ENCODE measurements at regions of chr4 and their contacts with region 1.

Region 1: DNA sequence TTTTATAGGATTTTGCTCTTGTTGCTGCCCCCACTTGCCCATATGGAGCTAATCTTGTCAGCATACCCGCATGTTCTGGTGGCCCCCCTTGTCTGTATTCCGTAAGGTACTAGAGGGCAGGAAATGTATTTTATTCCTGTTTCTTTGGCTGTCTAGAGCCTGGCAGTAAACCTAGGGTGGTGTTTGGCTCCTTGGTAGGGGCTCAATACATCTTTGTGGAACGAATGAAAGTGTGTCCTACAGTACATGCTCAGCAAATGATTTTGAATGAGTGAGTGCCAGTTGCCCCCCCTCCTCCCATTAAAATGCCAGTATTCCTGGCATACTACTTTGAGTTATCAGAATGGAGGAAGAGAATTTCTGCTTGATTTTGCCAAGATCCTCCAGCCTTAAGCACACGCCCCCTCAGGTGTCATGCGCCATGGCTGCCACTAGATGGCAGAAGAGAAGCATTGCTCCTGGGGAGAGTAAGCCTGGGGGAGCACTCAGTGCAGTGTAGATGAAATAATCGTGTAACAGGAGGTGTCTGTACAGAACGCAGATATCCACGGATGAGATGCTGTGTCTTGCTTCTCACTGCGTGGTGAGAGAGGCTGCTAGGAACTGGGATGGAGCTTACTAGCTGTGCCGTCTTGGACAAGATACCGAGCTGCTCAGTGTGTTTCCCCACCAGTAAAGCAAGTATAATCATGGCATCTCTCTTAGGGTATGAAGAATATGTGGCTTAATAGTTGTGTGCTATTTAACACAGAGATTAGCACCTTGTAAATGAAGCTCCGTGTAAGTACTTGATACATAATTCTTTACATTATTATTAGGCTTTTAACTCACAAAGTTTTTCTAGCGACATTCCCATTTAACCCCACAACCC is 17.2 kb upstream of the RNF212 start:
- DNase-seq: peak; percentile 74 to 91
- ATAC-seq: peak; percentile 96 to 100 (median 99)
- H3K4me3 ChIP-seq: no peak overlapping the region
- H3K4me3 Mint-ChIP-seq: no peak overlapping the region
- H3K27ac ChIP-seq: no peak overlapping the region
- H3K27ac Mint-ChIP-seq: peak overlapping the region in 1 of 2 donors; percentile 33
- H3K4me1 ChIP-seq: peaks cover 10% of the 10 kb centered on the region
- H3K4me1 Mint-ChIP-seq: peaks cover 0 to 15% of the 10 kb centered on the region in 2 donors
- H3K27me3 ChIP-seq: no peaks in the 10 kb centered on the region
- H3K27me3 Mint-ChIP-seq: peaks cover 0 to 13% of the 10 kb centered on the region in 2 donors
- CTCF ChIP-seq: peak; percentile 98

Region 2: DNA sequence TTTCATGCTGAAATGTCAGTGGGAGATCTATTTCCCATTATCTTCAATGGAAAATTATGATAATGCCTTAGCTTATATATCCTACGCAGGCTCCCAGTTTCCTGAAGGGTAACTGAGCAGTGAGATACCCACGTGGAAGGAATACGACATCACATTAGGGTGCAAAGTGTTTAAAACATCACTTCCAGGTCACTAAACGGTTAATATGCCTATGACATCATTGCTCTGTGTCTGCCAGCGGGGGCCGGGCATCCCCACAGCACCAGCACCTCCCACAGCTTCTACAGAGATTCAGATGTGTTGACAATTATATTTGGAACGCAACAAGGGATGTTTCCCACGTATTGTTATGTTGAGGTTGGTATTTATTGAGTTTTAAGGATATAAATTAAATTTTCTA is 581.6 kb before region 1 on chr4:
- intact Hi-C with region 1: no loop called
- DNase-seq: no peak
- ATAC-seq: no peak
- H3K4me3 ChIP-seq: no peak overlapping the region
- H3K4me3 Mint-ChIP-seq: no peak overlapping the region
- H3K27ac ChIP-seq: no peak overlapping the region
- H3K27ac Mint-ChIP-seq: no peak overlapping the region
- H3K4me1 ChIP-seq: no peaks in the 10 kb centered on the region
- H3K4me1 Mint-ChIP-seq: no peaks in the 10 kb centered on the region
- H3K27me3 ChIP-seq: peaks cover 4% of the 10 kb centered on the region
- H3K27me3 Mint-ChIP-seq: peaks cover 8 to 18% of the 10 kb centered on the region in 2 donors
- CTCF ChIP-seq: no peak

Region 3: GRCh38 chr4:781493-782216 is 348.9 kb before region 1 on chr4:
- intact Hi-C with region 1: no loop called
- DNase-seq: peak; percentile 99
- ATAC-seq: peak; percentile 87 to 97 (median 92)
- H3K4me3 ChIP-seq: peak overlapping the region; percentile 97
- H3K4me3 Mint-ChIP-seq: peak overlapping the region; percentile 92
- H3K27ac ChIP-seq: peak overlapping the region; percentile 77
- H3K27ac Mint-ChIP-seq: peak overlapping the region; percentile 93 to 97
- H3K4me1 ChIP-seq: peaks cover 43% of the 10 kb centered on the region
- H3K4me1 Mint-ChIP-seq: peaks cover 44 to 55% of the 10 kb centered on the region in 2 donors
- H3K27me3 ChIP-seq: peaks cover 12% of the 10 kb centered on the region
- H3K27me3 Mint-ChIP-seq: peaks cover 18 to 22% of the 10 kb centered on the region in 2 donors
- CTCF ChIP-seq: no peak

Region 4: DNA sequence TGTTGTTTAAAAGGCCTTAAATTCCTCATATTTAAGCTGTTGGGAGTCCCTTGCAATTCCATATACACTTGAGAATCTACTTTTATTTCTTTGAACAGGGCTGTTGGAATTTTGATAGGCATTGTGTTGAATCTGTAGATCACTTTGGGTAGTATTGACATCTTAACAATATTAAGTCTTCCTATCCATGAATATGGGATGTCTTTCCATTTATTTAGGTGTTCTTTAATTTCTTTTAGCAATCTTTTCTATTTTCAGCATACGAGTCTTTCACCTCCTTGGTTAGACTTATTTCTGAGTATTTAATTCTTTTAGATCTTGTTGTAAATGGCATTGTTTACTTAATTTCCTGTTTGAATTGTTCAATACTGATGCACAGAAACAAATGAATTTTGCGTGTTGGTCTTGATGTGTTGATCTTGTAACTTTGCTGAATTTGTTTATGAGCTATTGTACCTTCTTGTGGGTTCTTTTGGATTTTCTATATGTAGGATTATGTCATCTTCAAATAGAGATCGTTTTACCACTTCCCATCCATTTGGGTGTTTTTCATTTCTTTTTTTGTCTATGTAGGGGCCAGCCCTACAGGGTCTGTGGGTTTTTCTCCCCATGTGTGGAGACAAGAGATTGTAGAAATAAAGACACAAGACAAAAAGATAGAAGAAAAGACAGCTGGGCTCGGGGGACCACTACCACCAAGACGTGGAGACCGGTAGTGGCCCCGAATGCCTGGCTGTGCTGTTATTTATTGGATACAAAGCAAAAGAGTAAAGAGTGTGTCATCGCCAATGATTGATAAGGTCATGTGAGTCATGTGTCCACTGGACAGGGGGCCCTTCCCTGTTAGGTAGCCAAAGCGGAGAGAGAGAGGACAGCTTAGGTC is 136.6 kb after region 1 on chr4:
- intact Hi-C with region 1: loop called (anchors 1 kb)
- DNase-seq: peak in 1 of 2 donors; percentile 42
- ATAC-seq: peak in 2 of 3 donors; percentile 22 to 60
- H3K4me3 ChIP-seq: no peak overlapping the region
- H3K4me3 Mint-ChIP-seq: peak overlapping the region; percentile 64
- H3K27ac ChIP-seq: peak overlapping the region; percentile 83
- H3K27ac Mint-ChIP-seq: peak overlapping the region; percentile 92 to 95
- H3K4me1 ChIP-seq: peaks cover 7% of the 10 kb centered on the region
- H3K4me1 Mint-ChIP-seq: peaks cover 9 to 10% of the 10 kb centered on the region in 2 donors
- H3K27me3 ChIP-seq: no peaks in the 10 kb centered on the region
- H3K27me3 Mint-ChIP-seq: no peaks in the 10 kb centered on the region
- CTCF ChIP-seq: no peak

Region 5: GRCh38 chr4:1289207-1290164 is 158.9 kb after region 1 on chr4 and contains the start of gene MAEA:
- intact Hi-C with region 1: loop called (anchors 1 kb)
- DNase-seq: peak; percentile 97 to 98
- ATAC-seq: peak; percentile 94 to 99 (median 97)
- H3K4me3 ChIP-seq: peak within 1 kb of the TSS; percentile 65
- H3K4me3 Mint-ChIP-seq: peak within 1 kb of the TSS; percentile 95
- H3K27ac ChIP-seq: peak within 1 kb of the TSS; percentile 87
- H3K27ac Mint-ChIP-seq: peak within 1 kb of the TSS; percentile 87 to 90
- H3K4me1 ChIP-seq: peaks cover 38% of the 10 kb centered on the region
- H3K4me1 Mint-ChIP-seq: peaks cover 24 to 38% of the 10 kb centered on the region in 2 donors
- H3K27me3 ChIP-seq: no peaks in the 10 kb centered on the region
- H3K27me3 Mint-ChIP-seq: no peaks in the 10 kb centered on the region
- CTCF ChIP-seq: no peak
- total RNA-seq, gene MAEA: 63.5 to 89.2 (median 64.0) TPM

Region 6: GRCh38 chr4:1351854-1352633 is 221.5 kb after region 1 on chr4:
- intact Hi-C with region 1: loop called (anchors 1 kb)
- DNase-seq: peak; percentile 87 to 94
- ATAC-seq: peak; percentile 35 to 44 (median 37)
- H3K4me3 ChIP-seq: no peak overlapping the region
- H3K4me3 Mint-ChIP-seq: no peak overlapping the region
- H3K27ac ChIP-seq: peak overlapping the region; percentile 4
- H3K27ac Mint-ChIP-seq: peak overlapping the region; percentile 31 to 76
- H3K4me1 ChIP-seq: peaks cover 22% of the 10 kb centered on the region
- H3K4me1 Mint-ChIP-seq: peaks cover 27 to 29% of the 10 kb centered on the region in 2 donors
- H3K27me3 ChIP-seq: no peaks in the 10 kb centered on the region
- H3K27me3 Mint-ChIP-seq: no peaks in the 10 kb centered on the region
- CTCF ChIP-seq: peak; percentile 90

Region 7: DNA sequence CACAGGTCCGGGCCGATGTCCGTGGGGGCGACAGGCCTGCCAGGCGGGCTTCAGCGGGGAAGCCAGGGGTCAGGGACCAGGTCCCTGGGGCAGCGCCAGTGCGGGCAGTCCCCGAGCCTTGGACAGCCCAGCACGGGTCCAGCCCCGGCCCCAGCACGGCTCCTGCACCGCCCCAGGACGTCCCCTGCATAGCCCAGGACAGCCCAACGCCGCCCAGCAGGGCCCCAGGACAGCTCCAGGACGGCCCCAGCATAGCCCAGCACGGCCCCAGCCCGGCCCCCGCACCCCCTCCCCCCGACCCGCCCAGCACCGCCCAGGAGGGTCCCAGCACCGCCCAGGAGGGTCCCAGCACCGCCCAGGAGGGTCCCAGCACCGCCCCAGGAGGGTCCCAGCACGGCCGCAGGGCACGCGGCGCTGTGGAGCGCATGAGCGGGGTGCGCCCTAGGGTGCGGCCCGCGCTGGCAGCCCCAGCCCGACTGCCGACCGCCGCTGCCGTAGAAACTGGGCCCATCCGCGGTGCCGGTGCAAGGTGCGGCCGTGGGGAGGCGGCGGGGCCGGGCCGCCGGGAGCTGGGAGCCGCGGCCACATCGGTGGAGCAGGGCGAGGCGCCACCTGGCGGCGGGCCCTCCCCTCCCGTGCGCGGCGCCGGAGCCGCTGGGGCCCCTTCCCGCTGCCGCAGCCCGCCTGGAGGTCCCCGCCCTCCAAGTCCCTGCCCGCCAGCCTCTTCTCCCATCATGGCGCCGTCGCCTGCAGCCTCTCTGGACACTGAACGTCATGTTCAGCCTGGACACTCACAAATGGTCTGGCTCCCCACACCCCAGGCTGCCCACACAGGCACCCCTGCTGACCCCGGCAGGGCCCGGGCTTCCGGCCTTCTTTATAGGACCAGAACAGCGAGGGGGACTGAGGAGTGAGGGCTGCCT is 382.4 kb after region 1 on chr4:
- intact Hi-C with region 1: loop called (anchors 5 kb)
- DNase-seq: peak; percentile 37 to 74
- ATAC-seq: peak; percentile 54 to 88 (median 75)
- H3K4me3 ChIP-seq: no peak overlapping the region
- H3K4me3 Mint-ChIP-seq: no peak overlapping the region
- H3K27ac ChIP-seq: no peak overlapping the region
- H3K27ac Mint-ChIP-seq: no peak overlapping the region
- H3K4me1 ChIP-seq: no peaks in the 10 kb centered on the region
- H3K4me1 Mint-ChIP-seq: no peaks in the 10 kb centered on the region
- H3K27me3 ChIP-seq: peaks cover 3% of the 10 kb centered on the region
- H3K27me3 Mint-ChIP-seq: peaks cover 0 to 12% of the 10 kb centered on the region in 2 donors
- CTCF ChIP-seq: peak; percentile 67

Region 8: DNA sequence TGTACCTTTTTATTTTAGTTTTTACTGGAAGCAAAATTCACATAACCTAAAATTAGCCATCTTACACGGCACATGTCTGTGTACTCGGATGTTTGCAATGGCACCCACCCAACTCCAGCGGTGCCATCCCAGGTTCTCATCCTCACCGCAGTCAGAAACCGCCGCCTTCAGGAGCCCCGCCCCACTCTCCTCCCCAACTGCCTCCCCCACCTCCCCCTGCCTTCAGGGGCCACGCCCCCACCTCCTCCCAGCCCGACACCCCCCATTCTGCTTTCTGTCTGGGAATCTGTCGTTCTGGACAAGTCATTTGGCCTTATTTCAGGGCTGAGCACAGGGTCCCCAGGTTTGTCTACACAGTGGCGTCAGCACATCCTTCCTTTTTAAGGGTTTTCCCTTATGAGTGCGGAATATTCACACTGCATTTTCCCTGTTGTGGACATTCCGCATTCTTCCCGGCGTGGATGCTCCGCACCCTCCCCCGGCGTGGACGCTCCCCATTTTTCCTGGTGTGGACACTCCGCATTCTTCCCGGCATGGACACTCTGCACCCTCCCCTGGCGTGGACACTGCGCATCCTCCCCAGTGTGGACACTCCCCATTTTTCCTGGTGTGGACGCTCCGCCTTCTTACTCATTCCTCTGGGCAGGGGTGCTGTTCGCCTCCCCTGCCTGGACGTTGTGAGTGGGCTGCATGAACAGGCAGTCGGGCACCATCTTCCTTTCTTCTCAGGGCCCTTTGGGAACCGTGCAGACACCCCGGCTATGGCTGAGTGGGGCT is 411.1 kb after region 1 on chr4:
- intact Hi-C with region 1: no loop called
- DNase-seq: no peak
- ATAC-seq: no peak
- H3K4me3 ChIP-seq: no peak overlapping the region
- H3K4me3 Mint-ChIP-seq: no peak overlapping the region
- H3K27ac ChIP-seq: no peak overlapping the region
- H3K27ac Mint-ChIP-seq: no peak overlapping the region
- H3K4me1 ChIP-seq: no peaks in the 10 kb centered on the region
- H3K4me1 Mint-ChIP-seq: no peaks in the 10 kb centered on the region
- H3K27me3 ChIP-seq: no peaks in the 10 kb centered on the region
- H3K27me3 Mint-ChIP-seq: no peaks in the 10 kb centered on the region
- CTCF ChIP-seq: no peak

Region 9: GRCh38 chr4:1628892-1629698 is 498.5 kb after region 1 on chr4:
- intact Hi-C with region 1: loop called (anchors 2 kb)
- DNase-seq: peak; percentile 70 to 76
- ATAC-seq: peak; percentile 77 to 93 (median 93)
- H3K4me3 ChIP-seq: no peak overlapping the region
- H3K4me3 Mint-ChIP-seq: no peak overlapping the region
- H3K27ac ChIP-seq: no peak overlapping the region
- H3K27ac Mint-ChIP-seq: no peak overlapping the region
- H3K4me1 ChIP-seq: peaks cover 5% of the 10 kb centered on the region
- H3K4me1 Mint-ChIP-seq: no peaks in the 10 kb centered on the region
- H3K27me3 ChIP-seq: no peaks in the 10 kb centered on the region
- H3K27me3 Mint-ChIP-seq: no peaks in the 10 kb centered on the region
- CTCF ChIP-seq: peak; percentile 97

Measured in natural killer cell (primary cell).